GM18951 (cell line): ENCODE measurements at regions of chr1 and their contacts with region 1.

Region 1: GRCh38 chr1:91929250-91929649 is 20.0 kb upstream of the BRDT start:
- POLR2A ChIP-seq: no peak

Region 2: DNA sequence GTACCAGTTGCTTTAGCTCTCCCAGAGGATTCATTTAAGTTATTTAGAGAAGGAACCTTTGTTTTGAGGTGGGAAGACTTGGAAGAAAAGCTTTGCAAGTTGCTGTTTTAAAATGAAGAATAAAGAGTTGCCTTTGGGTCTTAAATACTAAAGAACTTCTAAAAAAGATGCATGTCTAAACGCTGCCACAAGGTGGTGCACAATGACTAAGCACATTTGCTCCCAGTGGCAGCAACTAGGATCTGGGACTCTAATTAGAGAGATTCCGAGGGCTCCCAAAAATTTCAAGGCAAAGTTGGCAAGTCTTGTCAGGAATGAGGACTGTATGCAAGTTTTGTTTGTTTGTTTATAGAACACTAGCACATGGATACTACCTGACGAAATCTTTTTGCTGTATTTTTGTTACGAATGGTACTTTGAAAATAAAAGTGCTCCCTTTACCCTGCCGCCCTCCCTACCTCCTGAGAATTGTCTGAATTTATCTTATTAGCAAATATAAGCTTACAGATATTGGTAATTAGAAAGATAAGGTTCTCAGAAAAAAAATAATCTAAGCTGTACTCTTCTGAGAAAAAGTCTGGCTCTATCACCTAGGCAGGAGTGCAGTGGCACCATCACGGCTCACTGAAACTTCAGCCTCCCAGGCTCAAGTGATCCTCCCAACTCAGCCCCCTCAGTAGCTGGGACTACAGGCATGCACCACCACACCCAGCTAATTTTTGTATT is 646.4 kb before region 1 on chr1:
- in situ Hi-C with region 1: loop called (anchors 25 kb)
- POLR2A ChIP-seq: no peak

Region 3: DNA sequence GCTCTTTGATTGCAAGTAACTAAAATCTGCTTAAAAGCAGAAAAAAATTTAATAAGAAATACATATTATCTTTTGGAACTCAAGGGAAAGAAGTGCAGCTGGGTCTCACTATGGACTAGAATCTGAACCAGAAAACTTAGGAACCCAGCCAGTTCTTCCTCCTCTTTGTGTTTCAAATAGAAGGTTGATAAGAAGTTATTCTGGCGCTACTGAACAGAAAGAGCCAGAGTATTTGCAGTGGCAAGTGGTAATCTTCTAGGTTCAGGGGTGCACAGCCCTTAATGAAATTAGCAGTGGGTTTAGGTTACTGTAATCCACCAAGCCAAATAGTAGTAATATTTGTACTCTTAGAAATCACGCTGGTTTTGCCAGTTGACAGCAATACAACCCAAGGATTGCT is 179.4 kb after region 1 on chr1:
- in situ Hi-C with region 1: no loop called
- POLR2A ChIP-seq: no peak